Left cardiac atrium (tissue), 4 donors: ENCODE measurements at regions of chr16 and their contacts with region 1.

Region 1: GRCh38 chr16:21584817-21585216 is 14.6 kb upstream of the METTL9 start:
- DNase-seq: no peak
- ATAC-seq: no peak

Region 2: GRCh38 chr16:21126518-21126917 is 458.3 kb before region 1 on chr16:
- intact Hi-C with region 1: no loop called
- DNase-seq: no peak
- ATAC-seq: no peak

Region 3: GRCh38 chr16:21644674-21645073 is 59.9 kb after region 1 on chr16:
- intact Hi-C with region 1: loop called (anchors 2 to 5 kb)
- DNase-seq: no peak
- ATAC-seq: no peak

Region 4: DNA sequence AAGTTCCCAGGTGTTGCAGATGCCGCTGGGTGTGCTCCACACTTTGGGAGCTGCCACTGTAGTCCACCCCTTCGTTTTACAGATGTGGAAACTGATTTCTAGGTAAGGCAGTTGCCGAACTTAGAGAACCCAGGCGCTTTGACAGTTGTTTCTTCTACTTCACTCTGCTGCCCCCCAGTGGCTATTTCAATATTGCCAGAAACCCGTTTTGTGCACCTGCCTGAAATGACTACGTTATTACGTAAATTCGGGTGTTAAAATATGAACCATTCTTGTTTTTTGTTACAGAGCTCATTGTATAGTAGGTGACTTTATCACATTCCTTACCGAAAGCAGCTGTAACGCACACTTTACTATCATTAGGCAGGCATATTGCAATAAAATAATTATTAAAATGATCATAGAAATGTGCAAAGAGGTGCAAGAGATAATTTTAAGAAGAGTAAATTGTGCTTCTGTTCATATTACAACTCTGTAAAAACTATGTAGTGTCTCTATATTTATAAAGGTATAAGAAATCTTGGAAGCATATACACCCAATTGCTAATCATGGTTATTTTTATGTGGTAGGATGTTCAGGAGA is 123.8 kb after region 1 on chr16:
- intact Hi-C with region 1: loop called (anchors 2 to 5 kb)
- DNase-seq: peak; percentile 56
- ATAC-seq: peak; percentile 49 to 50

Region 5: GRCh38 chr16:21727344-21727743 is 142.5 kb after region 1 on chr16:
- intact Hi-C with region 1: no loop called
- DNase-seq: no peak
- ATAC-seq: no peak